ENCODE measurements at regions of chr1 and their contacts with region 1.

Region 1: GRCh38 chr1:110630839-110631663 is 24.9 kb upstream of the KCNA2 start:
- DNase-seq: peak; percentile 77 to 93 (median 83)
- ATAC-seq: peak; percentile 72
- H3K4me3 ChIP-seq: peak overlapping the region; percentile 43
- H3K4me3 Mint-ChIP-seq: no peak overlapping the region
- H3K27ac ChIP-seq: peak overlapping the region; percentile 66 to 75
- H3K27ac Mint-ChIP-seq: no peak overlapping the region
- H3K4me1 ChIP-seq: peaks cover 87% of the 10 kb centered on the region
- H3K4me1 Mint-ChIP-seq: peaks cover 47% of the 10 kb centered on the region
- H3K27me3 ChIP-seq: no peaks in the 10 kb centered on the region
- H3K27me3 Mint-ChIP-seq: no peaks in the 10 kb centered on the region
- CTCF ChIP-seq: peak; percentile 87

Region 2: DNA sequence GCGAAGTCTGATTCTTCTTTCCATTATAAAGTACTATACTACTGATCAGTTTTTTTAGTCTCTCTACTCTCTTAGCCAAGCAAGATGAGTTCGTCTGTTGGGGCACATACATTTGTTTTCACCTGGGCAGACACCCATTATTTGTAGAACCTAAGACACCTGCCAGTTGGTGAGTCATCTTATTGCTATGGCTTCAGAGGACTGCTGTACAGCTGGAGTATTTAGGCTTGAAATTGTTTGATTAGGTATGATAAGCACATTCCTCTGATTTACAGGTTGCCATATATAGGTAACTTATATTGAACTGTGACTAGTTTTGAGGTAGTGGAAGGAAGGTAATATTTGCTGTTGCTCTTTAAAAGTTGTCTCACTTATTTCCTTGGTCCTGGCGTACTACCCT is 274.6 kb before region 1 on chr1:
- CTCF ChIA-PET with region 1: no interaction called
- POLR2A ChIA-PET with region 1: no interaction called
- intact Hi-C with region 1: no loop called
- DNase-seq: no peak
- ATAC-seq: no peak
- H3K4me3 ChIP-seq: no peak overlapping the region
- H3K4me3 Mint-ChIP-seq: no peak overlapping the region
- H3K27ac ChIP-seq: no peak overlapping the region
- H3K27ac Mint-ChIP-seq: peak overlapping the region; percentile 49
- H3K4me1 ChIP-seq: no peaks in the 10 kb centered on the region
- H3K4me1 Mint-ChIP-seq: peaks cover 32% of the 10 kb centered on the region
- H3K27me3 ChIP-seq: no peaks in the 10 kb centered on the region
- H3K27me3 Mint-ChIP-seq: no peaks in the 10 kb centered on the region
- CTCF ChIP-seq: no peak

Region 3: GRCh38 chr1:110645821-110646735 is 15.0 kb after region 1 on chr1:
- CTCF ChIA-PET with region 1: interaction called, 9 read pairs
- POLR2A ChIA-PET with region 1: interaction called, 138 read pairs
- intact Hi-C with region 1: loop called in 1 of 2 experiments (anchors 2 kb)
- DNase-seq: peak in 3 of 14 experiments; percentile 45 to 71 (median 62)
- ATAC-seq: no peak
- H3K4me3 ChIP-seq: no peak overlapping the region
- H3K4me3 Mint-ChIP-seq: peak overlapping the region; percentile 43
- H3K27ac ChIP-seq: no peak overlapping the region
- H3K27ac Mint-ChIP-seq: no peak overlapping the region
- H3K4me1 ChIP-seq: peaks cover 77% of the 10 kb centered on the region
- H3K4me1 Mint-ChIP-seq: peaks cover 46% of the 10 kb centered on the region
- H3K27me3 ChIP-seq: no peaks in the 10 kb centered on the region
- H3K27me3 Mint-ChIP-seq: no peaks in the 10 kb centered on the region
- CTCF ChIP-seq: no peak

Region 4: GRCh38 chr1:110668549-110668948 is 37.5 kb after region 1 on chr1:
- CTCF ChIA-PET with region 1: interaction called, 10 read pairs
- POLR2A ChIA-PET with region 1: interaction called, 94 read pairs
- intact Hi-C with region 1: loop called (anchors 1 to 2 kb)
- DNase-seq: peak in 4 of 14 experiments; percentile 5 to 68 (median 54)
- ATAC-seq: peak; percentile 23
- H3K4me3 ChIP-seq: peak overlapping the region; percentile 99
- H3K4me3 Mint-ChIP-seq: peak overlapping the region; percentile 80
- H3K27ac ChIP-seq: peak overlapping the region; percentile 33 to 39
- H3K27ac Mint-ChIP-seq: no peak overlapping the region
- H3K4me1 ChIP-seq: peaks cover 26% of the 10 kb centered on the region
- H3K4me1 Mint-ChIP-seq: peaks cover 52% of the 10 kb centered on the region
- H3K27me3 ChIP-seq: no peaks in the 10 kb centered on the region
- H3K27me3 Mint-ChIP-seq: no peaks in the 10 kb centered on the region
- CTCF ChIP-seq: no peak

Region 5: GRCh38 chr1:110686188-110686587 is 55.1 kb after region 1 on chr1:
- CTCF ChIA-PET with region 1: interaction called, 4 read pairs
- POLR2A ChIA-PET with region 1: no interaction called
- intact Hi-C with region 1: loop called (anchors 1 to 2 kb)
- DNase-seq: peak in 12 of 14 experiments; percentile 8 to 71 (median 32)
- ATAC-seq: peak; percentile 79
- H3K4me3 ChIP-seq: no peak overlapping the region
- H3K4me3 Mint-ChIP-seq: no peak overlapping the region
- H3K27ac ChIP-seq: no peak overlapping the region
- H3K27ac Mint-ChIP-seq: no peak overlapping the region
- H3K4me1 ChIP-seq: peaks cover 4% of the 10 kb centered on the region
- H3K4me1 Mint-ChIP-seq: no peaks in the 10 kb centered on the region
- H3K27me3 ChIP-seq: no peaks in the 10 kb centered on the region
- H3K27me3 Mint-ChIP-seq: no peaks in the 10 kb centered on the region
- CTCF ChIP-seq: peak; percentile 58

Region 6: GRCh38 chr1:110766025-110766647 is 135.1 kb after region 1 on chr1:
- CTCF ChIA-PET with region 1: interaction called, 10 read pairs
- POLR2A ChIA-PET with region 1: interaction called, 8 read pairs
- intact Hi-C with region 1: loop called (anchors 1 kb)
- DNase-seq: peak; percentile 22 to 87 (median 44)
- ATAC-seq: peak; percentile 82
- H3K4me3 ChIP-seq: no peak overlapping the region
- H3K4me3 Mint-ChIP-seq: no peak overlapping the region
- H3K27ac ChIP-seq: no peak overlapping the region
- H3K27ac Mint-ChIP-seq: no peak overlapping the region
- H3K4me1 ChIP-seq: peaks cover 4% of the 10 kb centered on the region
- H3K4me1 Mint-ChIP-seq: peaks cover 5% of the 10 kb centered on the region
- H3K27me3 ChIP-seq: no peaks in the 10 kb centered on the region
- H3K27me3 Mint-ChIP-seq: peaks cover 5% of the 10 kb centered on the region
- CTCF ChIP-seq: peak; percentile 93

Measured in CD4-positive, alpha-beta T cell (primary cell).